ENCODE measurements at regions of chr5 and their contacts with region 1.

Region 1: GRCh38 chr5:54517174-54518092 is at the start of gene SNX18:
- DNase-seq: peak; percentile 86
- H3K4me3 ChIP-seq: peak within 1 kb of the TSS; percentile 68
- H3K27ac ChIP-seq: peak within 1 kb of the TSS; percentile 73
- H3K27me3 ChIP-seq: no peaks in the 10 kb centered on the region
- CTCF ChIP-seq: peak; percentile 92
- polyA plus RNA-seq, gene SNX18: 68.1 and 74.1 TPM in 2 replicates

Region 2: GRCh38 chr5:54243473-54244080 is 273.9 kb before region 1 on chr5:
- CTCF ChIA-PET with region 1: interaction called, 11 read pairs
- POLR2A ChIA-PET with region 1: no interaction called
- DNase-seq: peak; percentile 10
- H3K4me3 ChIP-seq: no peak overlapping the region
- H3K27ac ChIP-seq: no peak overlapping the region
- H3K27me3 ChIP-seq: no peaks in the 10 kb centered on the region
- CTCF ChIP-seq: peak; percentile 70

Region 3: GRCh38 chr5:54425258-54425657 is 92.2 kb before region 1 on chr5:
- CTCF ChIA-PET with region 1: no interaction called
- POLR2A ChIA-PET with region 1: no interaction called
- DNase-seq: no peak
- H3K4me3 ChIP-seq: no peak overlapping the region
- H3K27ac ChIP-seq: no peak overlapping the region
- H3K27me3 ChIP-seq: peaks cover 27% of the 10 kb centered on the region
- CTCF ChIP-seq: no peak

Region 4: GRCh38 chr5:54844905-54845566 is 327.6 kb after region 1 on chr5:
- CTCF ChIA-PET with region 1: interaction called, 81 read pairs
- POLR2A ChIA-PET with region 1: interaction called, 3 read pairs
- DNase-seq: peak; percentile 41
- H3K4me3 ChIP-seq: no peak overlapping the region
- H3K27ac ChIP-seq: no peak overlapping the region
- H3K27me3 ChIP-seq: no peaks in the 10 kb centered on the region
- CTCF ChIP-seq: peak; percentile 40

Region 5: DNA sequence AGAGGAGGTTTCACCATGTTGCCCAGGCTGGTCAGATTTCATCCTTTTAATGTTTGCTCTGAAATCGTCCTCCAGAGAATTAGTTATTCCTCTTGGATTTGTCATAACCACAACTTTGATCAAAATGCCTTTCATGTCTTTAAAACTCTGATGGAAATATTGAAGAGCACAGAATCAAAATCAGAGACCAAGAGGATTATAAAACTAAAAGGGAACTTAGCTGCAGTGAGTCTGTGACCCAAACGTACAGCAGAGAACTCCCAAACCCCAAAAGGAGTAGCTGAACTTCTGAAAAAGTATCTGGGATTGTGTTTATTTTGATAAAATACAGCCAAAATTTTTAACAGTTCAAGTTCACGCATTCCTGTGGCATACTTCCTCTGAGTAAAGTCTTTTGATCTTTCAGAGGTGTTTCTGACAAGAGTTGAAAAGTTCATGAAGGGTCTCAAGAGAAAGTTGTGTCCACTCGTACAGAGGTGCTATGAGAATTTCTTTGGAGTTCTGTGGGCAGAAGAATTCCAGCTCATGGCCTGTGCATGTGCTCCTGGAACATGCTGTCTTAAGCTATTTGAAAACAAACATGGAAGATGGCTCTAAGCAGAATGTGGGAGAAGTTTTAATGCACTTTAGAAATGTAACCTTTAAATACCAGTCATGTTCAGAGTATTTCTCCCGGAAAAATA is 343.9 kb after region 1 on chr5:
- CTCF ChIA-PET with region 1: interaction called, 58 read pairs
- POLR2A ChIA-PET with region 1: no interaction called
- DNase-seq: peak; percentile 71
- H3K4me3 ChIP-seq: no peak overlapping the region
- H3K27ac ChIP-seq: peak overlapping the region; percentile 11
- H3K27me3 ChIP-seq: no peaks in the 10 kb centered on the region
- CTCF ChIP-seq: no peak

Region 6: GRCh38 chr5:54895816-54896341 is 378.4 kb after region 1 on chr5:
- CTCF ChIA-PET with region 1: interaction called, 30 read pairs
- POLR2A ChIA-PET with region 1: interaction called, 8 read pairs
- DNase-seq: no peak
- H3K4me3 ChIP-seq: no peak overlapping the region; the same call in 1 of the 2 replicates
- H3K27ac ChIP-seq: no peak overlapping the region
- H3K27me3 ChIP-seq: peaks cover 2% of the 10 kb centered on the region
- CTCF ChIP-seq: peak; percentile 73

Region 7: GRCh38 chr5:55159763-55160492 is 642.5 kb after region 1 on chr5 and contains the start of gene GPX8:
- CTCF ChIA-PET with region 1: interaction called, 10 read pairs
- POLR2A ChIA-PET with region 1: no interaction called
- DNase-seq: peak; percentile 78
- H3K4me3 ChIP-seq: peak within 1 kb of the TSS; percentile 78
- H3K27ac ChIP-seq: peak within 1 kb of the TSS; percentile 85
- H3K27me3 ChIP-seq: no peaks in the 10 kb centered on the region
- CTCF ChIP-seq: peak; percentile 66
- polyA plus RNA-seq, gene GPX8: 234 and 317 TPM in 2 replicates